ENCODE measurements at regions of chrX and their contacts with region 1.

Region 1: DNA sequence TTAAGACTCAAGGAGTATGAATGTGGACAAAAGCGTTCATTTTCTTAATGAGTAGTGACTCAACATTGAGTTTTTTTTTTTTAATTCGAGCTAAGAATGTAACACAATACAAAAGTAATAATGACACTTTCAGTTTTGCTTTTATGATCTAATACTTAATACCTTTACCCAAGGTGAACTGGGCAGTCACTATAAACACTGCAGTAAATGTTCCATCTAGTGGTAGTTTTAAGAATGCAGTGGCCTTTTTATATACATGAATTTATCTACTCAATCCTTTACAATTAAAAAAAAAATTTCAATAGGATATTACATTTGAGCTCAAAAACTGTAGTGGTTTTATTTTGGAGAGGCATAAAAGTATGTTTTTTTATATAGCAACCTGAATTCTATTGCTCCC is 33.9 kb downstream of the PDK3 start:
- DNase-seq: no peak
- H3K4me3 Mint-ChIP-seq: no peak overlapping the region
- H3K27ac Mint-ChIP-seq: no peak overlapping the region
- H3K4me1 Mint-ChIP-seq: peaks cover 22% of the 10 kb centered on the region
- H3K27me3 Mint-ChIP-seq: no peaks in the 10 kb centered on the region

Region 2: GRCh38 chrX:24081661-24082264 is 417.2 kb before region 1 on chrX:
- intact Hi-C with region 1: loop called (anchors 5 kb)
- DNase-seq: peak; percentile 21
- H3K4me3 Mint-ChIP-seq: peak overlapping the region; percentile 11
- H3K27ac Mint-ChIP-seq: no peak overlapping the region
- H3K4me1 Mint-ChIP-seq: peaks cover 13% of the 10 kb centered on the region
- H3K27me3 Mint-ChIP-seq: no peaks in the 10 kb centered on the region

Region 3: GRCh38 chrX:24294620-24295019 is 204.4 kb before region 1 on chrX:
- intact Hi-C with region 1: loop called (anchors 1 kb)
- DNase-seq: peak; percentile 2
- H3K4me3 Mint-ChIP-seq: no peak overlapping the region
- H3K27ac Mint-ChIP-seq: no peak overlapping the region
- H3K4me1 Mint-ChIP-seq: no peaks in the 10 kb centered on the region
- H3K27me3 Mint-ChIP-seq: no peaks in the 10 kb centered on the region

Region 4: DNA sequence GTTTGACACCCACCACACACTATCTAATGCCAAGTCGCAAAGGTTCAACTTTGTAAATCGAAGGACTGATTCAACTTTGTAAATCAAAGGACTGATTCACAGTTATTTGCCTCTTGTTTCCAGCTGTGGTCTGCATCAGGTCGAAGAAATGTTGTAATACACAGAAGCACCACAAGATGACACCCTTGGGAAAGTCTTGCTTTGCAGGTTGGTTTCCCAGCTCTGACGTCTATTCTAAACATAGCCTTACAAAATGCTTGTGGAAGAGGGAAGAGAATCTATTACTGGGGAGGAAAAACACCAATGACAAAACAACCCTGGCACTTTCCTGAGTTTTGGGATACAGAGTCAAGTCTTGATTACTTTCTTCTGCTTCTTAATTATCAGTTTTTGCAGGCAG is 103.2 kb before region 1 on chrX:
- intact Hi-C with region 1: loop called (anchors 1 kb)
- DNase-seq: peak; percentile 27
- H3K4me3 Mint-ChIP-seq: no peak overlapping the region
- H3K27ac Mint-ChIP-seq: no peak overlapping the region
- H3K4me1 Mint-ChIP-seq: peaks cover 6% of the 10 kb centered on the region
- H3K27me3 Mint-ChIP-seq: peaks cover 2% of the 10 kb centered on the region

Region 5: GRCh38 chrX:24479924-24480323 is 19.1 kb before region 1 on chrX:
- intact Hi-C with region 1: loop called (anchors 1 kb)
- DNase-seq: peak; percentile 71
- H3K4me3 Mint-ChIP-seq: peak overlapping the region; percentile 65
- H3K27ac Mint-ChIP-seq: peak overlapping the region; percentile 92
- H3K4me1 Mint-ChIP-seq: peaks cover 45% of the 10 kb centered on the region
- H3K27me3 Mint-ChIP-seq: no peaks in the 10 kb centered on the region

Region 6: GRCh38 chrX:24890677-24891076 is 391.7 kb after region 1 on chrX:
- intact Hi-C with region 1: no loop called
- DNase-seq: no peak
- H3K4me3 Mint-ChIP-seq: no peak overlapping the region
- H3K27ac Mint-ChIP-seq: no peak overlapping the region
- H3K4me1 Mint-ChIP-seq: no peaks in the 10 kb centered on the region
- H3K27me3 Mint-ChIP-seq: no peaks in the 10 kb centered on the region

Region 7: GRCh38 chrX:25519258-25519657 is 1020.3 kb after region 1 on chrX:
- intact Hi-C with region 1: no loop called
- DNase-seq: no peak
- H3K4me3 Mint-ChIP-seq: no peak overlapping the region
- H3K27ac Mint-ChIP-seq: no peak overlapping the region
- H3K4me1 Mint-ChIP-seq: no peaks in the 10 kb centered on the region
- H3K27me3 Mint-ChIP-seq: no peaks in the 10 kb centered on the region

Measured in activated T-helper 1 cell treated with anti-CD3 and anti-CD28 coated beads, Interleukin-12 subunit alpha, Interleukin-12 subunit beta, Interleukin-2, Interleukin-4 antibody, amounts not matched to agents 30 ng/mL and 10 ng/mL and 1 ng/mL, durations not matched to agents 14 hours and 24 hours and 36 hours (primary cell).